GM10248 (cell line): ENCODE measurements at regions of chr17 and their contacts with region 1.

Region 1: DNA sequence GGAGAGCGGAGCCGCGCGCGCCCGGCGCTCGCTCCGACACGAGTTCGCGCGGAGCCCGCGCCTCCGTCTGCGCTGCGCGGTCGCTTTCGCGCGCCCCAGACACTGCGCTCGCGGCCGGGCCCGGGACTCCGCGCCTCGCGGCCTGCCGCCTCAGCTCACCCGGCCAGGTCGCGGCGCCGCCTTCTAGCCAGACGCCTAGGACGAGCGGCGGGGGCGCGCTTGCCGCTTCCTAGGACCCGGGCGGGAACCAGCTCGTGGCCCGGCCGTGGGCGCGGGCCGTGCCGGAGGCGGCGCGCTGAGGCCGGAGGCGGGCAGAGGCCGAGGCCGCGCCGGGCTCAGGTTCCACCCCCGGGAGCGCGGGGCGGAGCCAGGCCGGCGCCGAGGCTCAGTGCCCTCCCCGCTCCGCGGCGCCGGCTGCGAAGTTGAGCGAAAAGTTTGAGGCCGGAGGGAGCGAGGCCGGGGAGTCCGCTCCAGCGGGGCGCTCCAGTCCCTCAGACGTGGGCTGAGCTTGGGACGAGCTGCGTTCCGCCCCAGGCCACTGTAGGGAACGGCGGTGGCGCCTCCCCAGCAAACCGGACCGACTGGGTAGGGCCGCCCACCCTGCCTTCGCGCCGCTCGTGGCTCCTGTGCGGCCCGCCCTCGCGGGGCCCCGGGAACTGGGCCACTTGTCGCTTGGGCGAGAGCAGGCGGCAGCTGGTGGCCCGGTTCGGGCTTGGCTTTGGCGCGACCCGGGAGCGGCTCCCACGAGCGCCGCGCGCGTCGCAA is at the start of gene SPHK1:
- DNase-seq: peak; percentile 90
- CTCF ChIP-seq: no peak

Region 2: GRCh38 chr17:76204277-76204676 is 180.1 kb before region 1 on chr17:
- CTCF ChIA-PET with region 1: no interaction called
- POLR2A ChIA-PET with region 1: no interaction called
- DNase-seq: no peak
- CTCF ChIP-seq: no peak

Region 3: DNA sequence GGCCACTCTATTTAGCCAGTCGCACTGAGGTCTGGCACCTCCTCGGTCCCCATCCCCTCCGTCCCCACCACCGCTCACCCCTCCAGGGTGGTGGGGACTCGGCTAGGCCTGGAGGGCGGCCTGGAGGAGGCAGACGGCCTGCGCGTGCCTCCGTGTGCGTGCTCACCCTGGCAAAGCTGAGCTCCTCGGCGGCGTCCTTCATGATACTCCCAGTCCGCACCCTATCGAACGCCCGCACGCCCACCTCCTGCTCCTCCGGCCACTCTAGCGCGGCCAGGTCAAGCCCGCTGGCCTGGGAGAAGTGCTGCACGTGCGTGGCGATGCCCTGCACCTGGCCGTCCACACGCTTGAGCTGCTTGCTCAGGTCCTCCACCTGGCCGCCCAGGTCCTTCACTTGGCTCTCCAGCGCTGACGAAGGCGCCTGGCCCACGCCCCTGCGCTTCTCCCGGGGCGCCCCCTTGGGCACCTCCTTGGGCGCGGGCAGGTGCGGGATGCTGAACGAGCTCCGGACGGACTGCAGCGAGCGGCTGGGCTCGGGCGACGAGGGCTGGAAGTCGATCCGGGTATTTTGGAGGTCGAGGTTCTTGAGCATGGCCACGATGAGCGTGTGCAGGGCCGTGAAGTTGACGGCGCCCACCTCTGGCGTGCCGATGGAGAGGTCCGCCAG is 77.0 kb before region 1 on chr17:
- CTCF ChIA-PET with region 1: interaction called, 59 read pairs
- POLR2A ChIA-PET with region 1: no interaction called
- DNase-seq: no peak
- CTCF ChIP-seq: no peak

Region 4: GRCh38 chr17:76314392-76315227 is 69.8 kb before region 1 on chr17:
- CTCF ChIA-PET with region 1: interaction called, 10 read pairs
- POLR2A ChIA-PET with region 1: no interaction called
- DNase-seq: no peak
- CTCF ChIP-seq: no peak

Region 5: DNA sequence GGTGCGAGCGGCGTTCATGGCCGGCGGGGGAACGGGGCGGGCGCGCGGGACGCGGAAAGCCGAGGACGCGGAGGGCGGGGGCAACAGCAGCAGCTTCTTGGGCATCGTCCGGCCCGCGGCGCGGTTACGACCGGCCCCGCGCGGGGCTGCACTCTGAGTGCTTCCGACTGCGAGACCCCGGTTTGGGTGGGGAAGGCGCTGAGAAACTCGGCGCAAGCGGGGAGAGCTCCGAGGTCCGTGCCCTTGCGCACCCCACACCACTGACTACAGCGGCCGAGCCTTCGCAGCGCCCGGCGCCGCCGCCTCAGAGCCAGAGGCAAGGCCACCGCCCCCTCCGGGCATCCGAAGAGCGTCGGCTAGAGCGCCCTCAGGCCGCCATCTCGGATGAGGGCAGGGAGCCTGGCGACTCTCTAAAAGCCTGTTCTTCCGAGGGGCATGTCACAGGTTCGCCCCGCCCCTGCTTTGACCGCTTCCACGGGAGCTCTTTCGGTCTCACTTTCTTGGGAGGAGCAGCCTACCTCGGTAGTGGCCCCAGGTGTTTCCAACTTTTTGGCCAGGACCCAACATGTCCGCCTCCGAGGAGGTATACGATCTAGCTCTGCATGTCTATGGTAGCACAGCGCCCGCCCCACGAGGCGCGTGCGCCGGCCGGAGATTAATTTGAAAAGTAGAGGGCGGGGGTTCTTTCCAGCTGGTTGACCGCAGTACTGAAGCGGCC is 30.6 kb before region 1 on chr17 and contains the start of gene PRPSAP1:
- CTCF ChIA-PET with region 1: interaction called, 23 read pairs
- POLR2A ChIA-PET with region 1: no interaction called
- DNase-seq: peak; percentile 93
- CTCF ChIP-seq: no peak

Region 6: GRCh38 chr17:76365256-76365903 is 19.0 kb before region 1 on chr17:
- CTCF ChIA-PET with region 1: interaction called, 21 read pairs
- POLR2A ChIA-PET with region 1: no interaction called
- DNase-seq: no peak
- CTCF ChIP-seq: peak; percentile 53

Region 7: DNA sequence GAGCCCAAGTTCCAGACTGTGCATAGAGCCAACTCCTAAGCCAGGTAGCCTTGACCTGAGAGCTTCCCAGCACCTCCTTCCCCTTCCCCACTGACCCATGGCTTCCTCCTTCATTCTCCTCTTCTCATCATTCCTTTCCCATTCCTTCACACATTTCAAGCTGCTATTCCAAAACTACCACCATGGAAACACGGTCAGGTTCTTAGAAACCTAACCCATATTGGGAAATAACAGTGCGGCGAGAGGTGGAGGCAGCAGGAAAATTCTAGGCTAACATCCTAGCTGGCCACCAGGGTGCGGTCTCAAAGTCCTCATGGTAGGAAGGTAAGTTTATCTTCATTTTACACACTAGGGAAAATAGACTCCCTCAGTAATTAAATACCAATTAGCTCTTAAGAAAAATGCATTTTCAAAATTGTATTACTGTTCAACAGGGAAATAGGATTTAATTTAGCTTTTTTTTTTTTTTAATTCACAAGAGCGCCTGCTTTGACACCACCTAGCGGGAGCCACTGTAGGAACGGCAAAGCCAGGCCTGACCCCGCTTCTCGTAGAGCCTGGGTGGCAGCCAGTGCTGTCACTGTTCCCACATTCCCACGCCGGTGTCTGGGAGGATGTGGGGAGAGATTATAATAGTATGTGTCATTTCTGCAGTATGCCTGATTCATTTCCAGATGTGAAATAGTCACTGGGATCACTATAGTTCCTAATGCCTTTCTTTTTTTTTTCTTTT is 14.0 kb before region 1 on chr17:
- CTCF ChIA-PET with region 1: interaction called, 21 read pairs
- POLR2A ChIA-PET with region 1: no interaction called
- DNase-seq: no peak
- CTCF ChIP-seq: no peak

Region 8: GRCh38 chr17:76408052-76408849 is 23.8 kb after region 1 on chr17:
- CTCF ChIA-PET with region 1: interaction called, 11 read pairs
- POLR2A ChIA-PET with region 1: no interaction called
- DNase-seq: peak; percentile 79
- CTCF ChIP-seq: peak; percentile 89

Region 9: DNA sequence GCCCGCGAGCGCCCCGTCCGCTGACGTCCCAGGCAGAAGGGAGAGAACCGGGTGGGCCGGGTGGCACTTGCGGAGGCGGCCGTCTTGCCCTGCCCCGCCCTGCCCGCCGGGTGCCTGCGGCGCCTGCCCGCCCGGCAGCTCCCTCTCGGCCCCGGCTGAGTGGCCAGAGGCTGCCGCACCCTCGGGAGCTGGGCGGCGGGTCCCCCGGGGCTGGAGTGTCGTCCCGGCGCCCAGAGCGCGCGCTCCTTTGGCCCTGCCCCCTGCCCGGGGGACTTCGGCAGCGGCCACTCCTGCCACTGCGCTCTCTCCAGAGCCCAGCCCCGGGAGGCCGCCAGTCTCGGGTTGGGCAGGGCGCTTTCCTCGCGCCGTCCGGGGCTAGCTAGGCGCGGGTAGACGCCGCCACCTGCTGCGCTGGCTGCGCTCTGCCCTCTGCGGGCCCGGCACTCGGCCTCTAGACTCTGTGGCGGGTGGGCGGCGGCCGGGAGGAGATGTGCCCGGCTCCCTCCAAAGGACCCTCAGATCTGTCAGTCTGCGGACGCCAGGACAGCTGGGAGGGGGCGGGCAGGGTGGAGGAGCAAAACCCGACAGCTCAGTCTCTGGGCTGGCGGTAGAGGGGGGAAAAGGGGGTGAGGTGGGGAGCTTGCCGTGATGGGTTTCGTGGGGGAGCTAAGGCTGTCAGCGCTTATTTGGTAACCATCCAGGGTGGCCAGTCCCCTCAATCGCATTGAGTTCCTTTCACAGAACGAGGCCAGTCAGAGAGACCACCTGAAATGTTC is 201.6 kb after region 1 on chr17 and contains the start of gene ST6GALNAC2:
- CTCF ChIA-PET with region 1: no interaction called
- POLR2A ChIA-PET with region 1: no interaction called
- DNase-seq: no peak
- CTCF ChIP-seq: peak; percentile 34